ENCODE measurements at regions of chr15 and their contacts with region 1.

Region 1: DNA sequence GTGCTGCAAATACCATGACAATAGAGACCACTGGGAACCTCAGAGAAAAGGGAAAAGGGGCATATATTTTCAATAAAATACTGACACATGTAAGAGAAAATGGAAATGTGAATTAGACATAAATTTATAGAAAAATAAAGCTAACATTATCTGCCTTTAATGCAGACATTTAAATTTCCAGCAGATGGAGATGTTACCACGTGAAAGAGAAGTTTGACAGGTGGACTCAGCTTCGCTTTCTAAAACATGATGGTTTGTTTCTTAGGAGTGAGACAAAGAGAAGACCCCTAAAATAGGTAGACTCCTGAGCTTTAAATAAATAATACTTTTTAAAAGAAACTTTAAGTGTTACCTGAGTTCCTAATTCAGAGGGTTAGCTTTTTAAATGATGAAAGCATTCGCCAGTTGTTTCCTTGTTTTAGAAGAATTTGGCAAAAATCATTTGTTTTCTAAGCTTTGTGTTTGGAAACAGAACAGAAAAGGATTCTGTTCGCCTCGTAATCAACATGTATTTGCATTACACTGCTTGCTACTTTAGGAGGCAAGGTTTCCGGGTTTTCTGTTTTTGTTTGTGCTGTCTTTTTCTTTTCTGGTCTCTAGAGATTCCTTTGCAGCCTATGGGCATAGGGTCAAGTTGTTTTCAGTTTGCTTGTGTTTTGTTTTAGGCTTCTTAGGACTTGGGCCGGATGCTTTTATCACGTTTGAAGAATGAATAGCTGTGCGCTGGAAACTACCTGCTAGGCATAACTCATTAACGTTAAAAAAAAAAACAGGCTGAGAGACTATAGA is 271.4 kb downstream of the THSD4 start:
- DNase-seq: peak in 1 of 35 experiments; percentile 21
- ATAC-seq: no peak
- H3K4me3 ChIP-seq: no peak overlapping the region
- H3K4me3 Mint-ChIP-seq: no peak overlapping the region
- H3K27ac ChIP-seq: no peak overlapping the region
- H3K27ac Mint-ChIP-seq: no peak overlapping the region
- H3K4me1 ChIP-seq: no peaks in the 10 kb centered on the region
- H3K4me1 Mint-ChIP-seq: peaks cover 0 to 11% (median 4%) of the 10 kb centered on the region in 3 donors
- H3K27me3 ChIP-seq: peaks cover 3 to 5% of the 10 kb centered on the region in 2 experiments
- H3K27me3 Mint-ChIP-seq: peaks cover 12 to 22% of the 10 kb centered on the region in 2 donors

Region 2: GRCh38 chr15:71055461-71055860 is 331.2 kb before region 1 on chr15:
- CTCF ChIA-PET with region 1: no interaction called
- POLR2A ChIA-PET with region 1: no interaction called
- DNase-seq: no peak
- ATAC-seq: no peak
- H3K4me3 ChIP-seq: no peak overlapping the region
- H3K4me3 Mint-ChIP-seq: no peak overlapping the region
- H3K27ac ChIP-seq: no peak overlapping the region
- H3K27ac Mint-ChIP-seq: no peak overlapping the region
- H3K4me1 ChIP-seq: no peaks in the 10 kb centered on the region
- H3K4me1 Mint-ChIP-seq: no peaks in the 10 kb centered on the region
- H3K27me3 ChIP-seq: no peaks in the 10 kb centered on the region
- H3K27me3 Mint-ChIP-seq: peaks cover 0 to 24% of the 10 kb centered on the region in 2 donors

Region 3: DNA sequence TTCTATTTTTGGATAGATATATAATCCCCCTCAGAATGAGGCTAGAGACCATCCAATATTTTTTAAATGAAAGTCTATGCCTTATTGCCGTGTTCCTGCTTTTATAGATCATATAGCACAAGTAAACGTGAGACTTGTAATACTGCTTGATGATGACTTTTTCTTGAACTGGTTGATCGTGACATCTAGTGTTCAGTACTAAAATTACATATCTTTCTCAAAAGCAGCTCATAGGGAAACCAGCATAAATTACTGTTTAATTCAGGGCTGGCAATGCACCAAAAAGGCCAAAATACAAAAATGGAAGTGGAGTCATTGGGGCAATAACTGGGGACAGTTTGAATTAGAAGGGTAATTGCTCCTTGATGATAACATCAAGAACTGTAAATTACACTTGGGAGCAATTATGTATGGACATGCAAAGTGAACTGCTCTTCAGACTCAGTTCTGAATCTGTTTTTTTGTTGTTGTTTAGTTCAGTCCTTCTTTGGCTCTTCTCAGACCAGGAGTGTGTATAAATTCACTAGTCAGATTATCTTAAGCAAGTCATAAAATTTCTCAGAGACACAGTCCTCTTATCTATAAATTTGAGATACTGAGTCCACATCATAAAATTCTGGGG is 54.0 kb after region 1 on chr15:
- CTCF ChIA-PET with region 1: interaction called, 4 to 18 read pairs
- POLR2A ChIA-PET with region 1: no interaction called
- DNase-seq: peak in 1 of 35 experiments; percentile 47
- ATAC-seq: no peak
- H3K4me3 ChIP-seq: no peak overlapping the region
- H3K4me3 Mint-ChIP-seq: no peak overlapping the region
- H3K27ac ChIP-seq: no peak overlapping the region
- H3K27ac Mint-ChIP-seq: no peak overlapping the region
- H3K4me1 ChIP-seq: no peaks in the 10 kb centered on the region
- H3K4me1 Mint-ChIP-seq: no peaks in the 10 kb centered on the region
- H3K27me3 ChIP-seq: no peaks in the 10 kb centered on the region
- H3K27me3 Mint-ChIP-seq: peaks cover 0 to 14% of the 10 kb centered on the region in 2 donors

Region 4: DNA sequence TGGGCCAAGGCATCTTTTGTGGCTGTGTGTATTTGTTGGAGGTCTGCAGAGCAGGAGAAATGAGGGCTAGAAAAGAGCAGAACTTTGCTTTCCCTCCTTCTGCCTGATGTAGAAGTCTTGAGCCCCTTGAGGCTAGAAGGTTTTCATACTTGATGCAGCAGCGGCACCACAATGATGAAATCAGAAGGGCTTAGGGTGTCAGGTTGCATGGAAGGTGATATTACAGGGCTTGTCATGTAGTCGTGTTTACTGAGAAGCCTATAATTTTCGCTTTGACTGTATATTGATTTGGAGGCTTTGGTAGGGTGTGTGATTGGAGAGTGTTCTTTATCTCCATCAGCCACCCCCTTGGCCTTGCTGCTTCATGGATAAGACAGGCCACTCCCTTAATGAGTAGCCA is 68.5 kb after region 1 on chr15:
- CTCF ChIA-PET with region 1: interaction called in 1 of 2 experiments, 13 read pairs
- POLR2A ChIA-PET with region 1: no interaction called
- DNase-seq: no peak
- ATAC-seq: no peak
- H3K4me3 ChIP-seq: no peak overlapping the region
- H3K4me3 Mint-ChIP-seq: no peak overlapping the region
- H3K27ac ChIP-seq: no peak overlapping the region
- H3K27ac Mint-ChIP-seq: no peak overlapping the region
- H3K4me1 ChIP-seq: no peaks in the 10 kb centered on the region
- H3K4me1 Mint-ChIP-seq: no peaks in the 10 kb centered on the region
- H3K27me3 ChIP-seq: peaks cover 0 to 13% of the 10 kb centered on the region in 2 experiments
- H3K27me3 Mint-ChIP-seq: peaks cover 18 to 21% of the 10 kb centered on the region in 2 donors

Measured in T-cell (primary cell).